Heart left ventricle (tissue), 16 donors: ENCODE measurements at regions of chr4 and their contacts with region 1.

Region 1: GRCh38 chr4:85968945-85969819 is 390.7 kb downstream of the MAPK10 start:
- DNase-seq: no peak
- ATAC-seq: peak; percentile 38 to 74 (median 55)
- H3K4me3 ChIP-seq: no peak overlapping the region
- H3K27ac ChIP-seq: no peak overlapping the region
- H3K4me1 ChIP-seq: peaks cover 0 to 43% (median 12%) of the 10 kb centered on the region in 12 donors
- H3K27me3 ChIP-seq: no peaks in the 10 kb centered on the region
- CTCF ChIP-seq: peak; percentile 44 to 78 (median 63)
- POLR2A ChIP-seq: no peak

Region 2: GRCh38 chr4:85142451-85142850 is 826.7 kb before region 1 on chr4:
- intact Hi-C with region 1: loop called in 7 of 10 experiments (anchors 1 to 10 kb)
- DNase-seq: no peak
- ATAC-seq: peak in 1 of 4 donors; percentile 18
- H3K4me3 ChIP-seq: no peak overlapping the region
- H3K27ac ChIP-seq: peak overlapping the region in 4 of 12 donors; percentile 8 to 49 (median 20)
- H3K4me1 ChIP-seq: no peaks in the 10 kb centered on the region
- H3K27me3 ChIP-seq: no peaks in the 10 kb centered on the region
- CTCF ChIP-seq: no peak
- POLR2A ChIP-seq: no peak

Region 3: DNA sequence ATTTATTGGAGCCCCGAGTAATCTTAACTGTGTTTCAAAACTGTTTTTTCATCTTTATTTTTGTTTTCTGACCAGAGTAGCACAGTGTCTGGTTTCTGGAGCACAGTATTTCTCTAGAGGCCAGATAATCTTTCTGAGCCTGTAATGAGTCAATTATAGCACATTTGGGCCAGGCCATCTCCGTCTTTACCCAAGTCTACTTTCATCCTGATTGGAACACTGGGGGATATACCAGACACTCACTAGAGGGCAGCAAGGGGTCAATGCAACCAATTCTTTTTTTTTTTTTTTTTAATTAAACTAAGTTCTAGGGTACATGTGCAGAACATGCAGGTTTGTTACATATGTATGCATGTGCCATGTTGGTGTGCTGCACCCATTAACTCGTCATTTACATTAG is 212.2 kb before region 1 on chr4:
- intact Hi-C with region 1: loop called in 6 of 10 experiments (anchors 5 to 10 kb)
- DNase-seq: peak in 1 of 5 donors; percentile 44
- ATAC-seq: peak in 3 of 4 donors; percentile 38 to 83 (median 59)
- H3K4me3 ChIP-seq: no peak overlapping the region
- H3K27ac ChIP-seq: no peak overlapping the region
- H3K4me1 ChIP-seq: peaks cover 0 to 36% (median 13%) of the 10 kb centered on the region in 12 donors
- H3K27me3 ChIP-seq: no peaks in the 10 kb centered on the region
- CTCF ChIP-seq: peak; percentile 22 to 64 (median 44)
- POLR2A ChIP-seq: no peak

Region 4: GRCh38 chr4:85798012-85798770 is 171.0 kb before region 1 on chr4:
- intact Hi-C with region 1: loop called (anchors 1 to 5 kb)
- DNase-seq: no peak
- ATAC-seq: no peak
- H3K4me3 ChIP-seq: no peak overlapping the region
- H3K27ac ChIP-seq: peak overlapping the region in 3 of 12 donors; percentile 11 to 21 (median 18)
- H3K4me1 ChIP-seq: peaks cover 0 to 26% (median 10%) of the 10 kb centered on the region in 12 donors
- H3K27me3 ChIP-seq: no peaks in the 10 kb centered on the region
- CTCF ChIP-seq: no peak
- POLR2A ChIP-seq: no peak

Region 5: DNA sequence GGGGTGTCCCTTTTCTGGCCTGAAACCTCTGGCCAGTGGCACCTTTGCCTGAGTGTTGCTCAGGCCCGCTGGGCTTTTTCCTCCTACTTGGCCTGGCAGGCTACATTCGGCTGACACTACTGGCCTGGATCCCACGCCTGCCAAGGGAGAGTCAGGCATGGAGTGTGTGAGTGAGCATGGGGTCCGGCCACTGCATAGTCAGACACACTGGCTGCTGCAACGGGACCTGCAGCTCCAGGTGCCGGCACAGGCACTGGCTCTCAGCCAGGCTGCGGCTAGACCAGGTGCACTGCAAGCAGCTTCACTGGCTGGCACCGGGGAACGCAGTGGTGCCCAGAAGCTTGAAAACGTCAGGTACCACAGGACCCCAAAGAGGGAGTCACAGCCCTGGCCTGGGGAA is 59.3 kb before region 1 on chr4:
- intact Hi-C with region 1: loop called in 1 of 10 experiments (anchors 5 kb)
- DNase-seq: peak; percentile 32 to 61 (median 49)
- ATAC-seq: peak; percentile 73 to 93 (median 84)
- H3K4me3 ChIP-seq: no peak overlapping the region
- H3K27ac ChIP-seq: no peak overlapping the region
- H3K4me1 ChIP-seq: peaks cover 0 to 17% (median 0%) of the 10 kb centered on the region in 12 donors
- H3K27me3 ChIP-seq: no peaks in the 10 kb centered on the region
- CTCF ChIP-seq: no peak
- POLR2A ChIP-seq: no peak